ENCODE measurements at regions of chr1 and their contacts with region 1.

Region 1: DNA sequence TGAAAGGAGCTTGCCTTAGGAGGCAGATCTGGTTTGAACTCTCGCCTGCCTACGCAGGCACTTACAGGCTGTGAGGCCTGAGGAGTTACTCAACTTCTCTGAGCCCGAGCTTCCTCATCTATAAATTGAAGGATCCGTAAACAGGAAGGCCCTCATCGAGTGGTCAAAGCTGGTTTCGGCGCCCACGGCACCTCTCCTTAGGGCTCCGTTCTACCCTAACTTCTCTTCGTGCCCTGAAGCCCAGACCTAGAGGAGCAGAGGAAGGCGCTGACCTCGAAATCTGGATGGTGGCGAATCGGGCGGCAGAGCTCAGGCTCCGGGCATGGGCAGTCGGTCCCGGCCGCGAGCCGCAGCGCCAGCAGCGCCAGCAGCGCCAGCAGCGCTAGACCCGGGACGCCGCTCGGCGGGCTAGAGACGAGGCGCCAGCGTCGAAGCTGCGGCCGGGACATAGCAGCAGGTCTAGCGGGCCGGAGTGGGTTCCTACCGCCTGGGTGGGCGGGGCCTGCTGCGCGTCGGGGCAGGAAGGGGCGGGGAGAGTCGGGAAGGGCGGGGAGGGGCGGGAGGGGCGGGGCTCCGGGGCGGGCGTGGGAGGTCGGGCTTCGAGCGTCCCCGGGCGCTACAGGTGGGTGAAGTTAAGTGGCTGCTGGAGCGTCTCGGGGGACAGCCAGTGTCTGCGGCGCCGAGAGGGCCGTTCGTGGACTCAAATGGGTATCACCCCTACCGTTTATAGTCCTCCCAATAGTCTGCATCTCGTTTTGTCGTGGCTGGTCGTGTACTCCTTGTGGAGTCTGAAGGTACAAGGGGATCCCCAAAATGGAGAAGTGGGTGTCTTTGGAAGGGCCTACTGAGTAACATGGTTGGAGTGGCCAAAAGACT is at the start of gene CTBS:
- DNase-seq: peak; percentile 95
- H3K4me3 ChIP-seq: peak within 1 kb of the TSS; percentile 63 to 75 (median 65)
- H3K27ac ChIP-seq: peak within 1 kb of the TSS; percentile 95 to 99 (median 98)
- H3K4me1 ChIP-seq: peaks cover 0 to 33% (median 18%) of the 10 kb centered on the region in 4 donors
- H3K27me3 ChIP-seq: no peaks in the 10 kb centered on the region
- CTCF ChIP-seq: no peak
- EP300 ChIP-seq: no peak
- POLR2A ChIP-seq: peak; percentile 55
- total RNA-seq, gene CTBS: 9.7 to 20.1 (median 14.2) TPM

Region 2: GRCh38 chr1:84478876-84479868 is 95.0 kb before region 1 on chr1 and contains the start of gene RPF1:
- intact Hi-C with region 1: loop called (anchors 1 kb)
- DNase-seq: peak; percentile 79
- H3K4me3 ChIP-seq: peak within 1 kb of the TSS; percentile 68 to 81 (median 74)
- H3K27ac ChIP-seq: peak within 1 kb of the TSS; percentile 84 to 92 (median 88)
- H3K4me1 ChIP-seq: peaks cover 0 to 31% (median 20%) of the 10 kb centered on the region in 4 donors
- H3K27me3 ChIP-seq: peaks cover 0 to 22% (median 7%) of the 10 kb centered on the region in 3 donors
- CTCF ChIP-seq: no peak
- EP300 ChIP-seq: no peak
- POLR2A ChIP-seq: peak; percentile 61 to 63
- total RNA-seq, gene RPF1: 30.7 to 66.5 (median 41.8) TPM

Region 3: GRCh38 chr1:84550826-84551225 is 23.4 kb before region 1 on chr1:
- intact Hi-C with region 1: no loop called
- DNase-seq: no peak
- H3K4me3 ChIP-seq: no peak overlapping the region
- H3K27ac ChIP-seq: no peak overlapping the region
- H3K4me1 ChIP-seq: no peaks in the 10 kb centered on the region
- H3K27me3 ChIP-seq: no peaks in the 10 kb centered on the region
- CTCF ChIP-seq: no peak
- EP300 ChIP-seq: no peak
- POLR2A ChIP-seq: no peak

Region 4: GRCh38 chr1:84620720-84621313 is 46.6 kb after region 1 on chr1:
- intact Hi-C with region 1: loop called (anchors 5 kb)
- DNase-seq: peak; percentile 88
- H3K4me3 ChIP-seq: peak overlapping the region; percentile 42 to 64 (median 58)
- H3K27ac ChIP-seq: peak overlapping the region; percentile 68 to 80 (median 76)
- H3K4me1 ChIP-seq: peaks cover 0 to 46% (median 22%) of the 10 kb centered on the region in 4 donors
- H3K27me3 ChIP-seq: no peaks in the 10 kb centered on the region
- CTCF ChIP-seq: peak; percentile 74 to 99 (median 79)
- EP300 ChIP-seq: no peak
- POLR2A ChIP-seq: no peak